AG04449 (cell line): ENCODE measurements at regions of chr17 and their contacts with region 1.

Region 1: DNA sequence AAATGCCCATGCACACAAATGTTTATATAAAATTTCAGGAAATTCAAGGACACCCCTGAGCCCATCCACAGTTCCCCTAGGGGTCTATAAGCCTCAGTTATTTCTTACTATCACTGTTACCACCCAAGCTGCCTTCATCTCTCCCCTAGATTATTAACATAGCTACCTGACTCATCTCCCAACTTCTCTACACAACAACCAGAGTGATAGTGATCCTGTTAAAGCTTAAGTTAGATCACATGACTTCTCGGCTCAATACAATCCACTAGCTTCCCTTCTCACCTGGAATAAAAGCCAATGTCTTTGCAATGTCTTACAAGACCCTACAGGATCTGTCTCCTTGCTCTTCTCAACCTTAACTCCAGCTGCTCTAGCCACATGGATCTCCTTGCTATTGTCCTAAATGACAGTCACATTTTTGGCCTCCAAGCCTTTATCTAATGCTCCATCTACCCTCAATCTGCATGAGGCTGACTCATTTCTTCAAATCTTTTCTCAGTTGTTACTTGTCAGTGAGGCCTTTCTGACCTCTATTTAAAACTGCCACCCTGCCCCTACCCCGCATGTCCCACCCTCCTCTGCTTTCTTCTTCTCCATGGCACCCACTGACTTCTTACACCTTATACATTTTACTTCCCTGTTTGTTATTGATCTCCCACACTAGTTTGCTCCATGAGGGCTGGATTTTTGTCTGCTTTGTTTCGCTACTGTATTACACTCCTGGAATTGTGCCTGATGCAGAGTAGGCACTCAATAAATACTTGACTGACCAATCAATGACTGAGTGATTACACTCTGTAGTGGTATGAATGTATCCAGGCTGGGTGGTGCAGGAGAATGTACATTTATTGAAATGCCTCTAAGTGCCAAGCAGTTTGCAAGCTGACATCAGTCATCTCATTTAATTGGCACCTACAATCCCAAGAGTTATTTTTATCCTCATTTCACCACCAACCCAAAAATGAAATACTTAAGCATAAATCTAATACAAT is 5.2 kb upstream of the LIG3 start:
- DNase-seq: no peak
- H3K4me3 ChIP-seq: no peak overlapping the region
- CTCF ChIP-seq: no peak

Region 2: GRCh38 chr17:34961093-34961911 is 13.8 kb before region 1 on chr17 and contains the starts of genes CCT6B and ZNF830:
- CTCF ChIA-PET with region 1: interaction called, 11 read pairs
- POLR2A ChIA-PET with region 1: interaction called, 5 read pairs
- DNase-seq: peak; percentile 71
- H3K4me3 ChIP-seq: peak within 1 kb of the TSS; percentile 98
- CTCF ChIP-seq: no peak

Region 3: GRCh38 chr17:35006953-35007352 is 31.9 kb after region 1 on chr17:
- CTCF ChIA-PET with region 1: no interaction called
- POLR2A ChIA-PET with region 1: no interaction called
- DNase-seq: no peak
- H3K4me3 ChIP-seq: no peak overlapping the region
- CTCF ChIP-seq: no peak